ENCODE measurements at regions of chr2 and their contacts with region 1.

Region 1: DNA sequence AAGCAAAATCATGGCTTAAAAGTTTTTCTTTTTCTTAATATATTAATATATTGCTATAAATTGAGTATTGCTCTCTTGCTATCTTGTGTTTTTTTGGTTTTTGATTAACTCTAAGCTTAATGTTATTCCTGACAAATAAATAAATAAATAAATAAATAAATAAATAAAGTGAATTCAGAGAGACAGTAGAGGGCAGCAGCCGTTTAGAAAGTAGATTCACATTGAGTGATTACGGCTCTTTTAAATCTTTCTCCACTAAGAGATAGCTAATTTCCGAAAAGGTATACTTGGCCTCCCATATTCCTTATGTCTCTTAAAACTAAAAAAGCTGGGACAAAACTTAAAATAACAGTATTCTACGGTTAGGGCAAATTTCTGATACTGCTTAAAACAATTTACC is 34.3 kb downstream of the MSH2 start:
- DNase-seq: no peak

Region 2: DNA sequence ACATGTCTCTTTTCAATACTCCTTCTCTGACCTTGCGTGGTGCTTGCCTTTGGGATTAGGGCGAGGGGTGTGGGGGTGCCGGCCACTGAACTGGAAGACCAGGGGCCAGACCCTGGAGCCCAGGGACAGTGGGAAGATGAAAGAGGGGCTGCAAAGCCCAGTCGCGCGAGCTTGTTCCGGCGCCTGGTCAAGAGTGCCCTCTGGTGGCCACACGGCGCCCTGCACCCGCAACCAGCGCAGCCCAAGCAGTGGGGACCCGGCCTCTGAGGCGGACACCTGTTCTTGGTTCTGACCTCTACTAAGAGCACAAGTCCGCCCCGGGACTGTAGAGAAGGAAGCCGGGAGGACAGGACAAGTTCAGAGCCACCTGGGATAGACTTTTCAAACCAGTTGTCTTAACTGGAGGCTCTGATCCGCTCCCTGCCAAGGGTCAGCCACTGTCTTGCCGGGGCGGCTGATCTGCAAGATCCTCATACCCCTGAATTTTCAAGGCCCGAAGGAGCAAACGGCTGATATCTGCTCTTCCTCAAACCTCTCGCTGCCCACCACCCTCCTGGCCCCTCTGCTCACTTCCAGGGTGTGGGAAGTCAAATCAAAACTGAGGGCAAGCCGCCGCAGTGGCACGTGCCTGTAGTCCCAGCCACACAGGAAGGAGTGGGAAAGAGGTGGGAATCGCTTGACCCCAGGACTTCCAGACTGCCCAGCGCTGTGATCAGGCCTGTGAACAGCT is 330.8 kb after region 1 on chr2:
- intact Hi-C with region 1: loop called (anchors 1 kb)
- DNase-seq: peak; percentile 53 to 96 (median 80)

Region 3: GRCh38 chr2:48107326-48107925 is 670.1 kb after region 1 on chr2:
- intact Hi-C with region 1: loop called (anchors 2 kb)
- DNase-seq: no peak

Measured in posterior cingulate gyrus (tissue), 11 donors.